ENCODE measurements at regions of chr17 and their contacts with region 1.

Region 1: DNA sequence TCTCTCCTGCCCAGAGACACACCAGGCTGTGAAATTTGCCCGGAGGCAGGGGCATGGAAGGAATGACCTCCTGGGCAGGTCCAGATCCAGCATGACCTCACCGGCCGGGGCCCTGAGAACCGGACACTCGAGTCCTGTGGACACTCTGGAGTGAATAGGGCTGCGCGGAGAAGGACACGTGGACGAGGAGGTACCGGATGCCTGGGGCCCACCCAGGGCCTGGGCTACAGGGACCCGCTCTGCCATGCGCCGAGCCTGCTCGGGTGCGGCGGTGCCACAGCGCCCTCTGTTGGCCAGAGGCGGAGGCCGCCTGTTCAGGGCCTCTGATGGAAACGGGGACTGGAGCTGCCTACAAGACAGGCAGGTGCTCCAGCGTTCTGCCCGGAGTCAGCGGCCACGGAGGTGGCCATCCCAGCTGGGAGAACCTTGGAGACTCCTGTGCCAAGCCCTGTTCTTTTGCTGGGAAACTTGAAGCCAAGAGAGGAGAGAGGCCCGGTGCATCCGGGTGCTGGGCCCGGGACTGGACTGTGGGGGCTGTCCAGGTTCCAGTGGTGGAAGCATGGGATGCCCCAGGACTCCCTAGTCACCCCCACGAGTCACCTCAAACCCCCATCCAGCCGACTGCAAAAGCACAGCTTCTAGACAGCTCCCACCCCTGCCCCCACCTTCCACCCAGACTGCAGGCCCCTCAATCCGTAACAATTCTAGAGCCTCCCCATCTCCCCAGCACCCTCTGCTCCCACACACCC is 19.3 kb upstream of the NXPH3 start:
- DNase-seq: no peak
- H3K4me3 ChIP-seq: no peak overlapping the region
- H3K27ac ChIP-seq: no peak overlapping the region
- H3K27me3 ChIP-seq: peaks cover 9% of the 10 kb centered on the region
- CTCF ChIP-seq: peak; percentile 98

Region 2: GRCh38 chr17:49399995-49400394 is 156.4 kb before region 1 on chr17:
- CTCF ChIA-PET with region 1: interaction called, 16 read pairs
- POLR2A ChIA-PET with region 1: no interaction called
- DNase-seq: no peak
- H3K4me3 ChIP-seq: no peak overlapping the region
- H3K27ac ChIP-seq: no peak overlapping the region
- H3K27me3 ChIP-seq: no peaks in the 10 kb centered on the region
- CTCF ChIP-seq: no peak

Region 3: GRCh38 chr17:49414622-49415350 is 141.6 kb before region 1 on chr17 and contains the start of gene PHB1:
- CTCF ChIA-PET with region 1: interaction called, 37 read pairs
- POLR2A ChIA-PET with region 1: no interaction called
- DNase-seq: peak; percentile 91
- H3K4me3 ChIP-seq: peak within 1 kb of the TSS; percentile 100
- H3K27ac ChIP-seq: no peak within 1 kb of the TSS
- H3K27me3 ChIP-seq: no peaks in the 10 kb centered on the region
- CTCF ChIP-seq: no peak
- polyA plus RNA-seq, gene PHB1: 228 and 263 TPM in 2 replicates

Region 4: GRCh38 chr17:49434821-49435670 is 121.4 kb before region 1 on chr17:
- CTCF ChIA-PET with region 1: interaction called, 119 read pairs
- POLR2A ChIA-PET with region 1: no interaction called
- DNase-seq: no peak
- H3K4me3 ChIP-seq: no peak overlapping the region
- H3K27ac ChIP-seq: no peak overlapping the region
- H3K27me3 ChIP-seq: peaks cover 41% of the 10 kb centered on the region
- CTCF ChIP-seq: peak; percentile 70

Region 5: GRCh38 chr17:49496183-49496866 is 60.1 kb before region 1 on chr17:
- CTCF ChIA-PET with region 1: interaction called, 25 read pairs
- POLR2A ChIA-PET with region 1: no interaction called
- DNase-seq: no peak
- H3K4me3 ChIP-seq: no peak overlapping the region
- H3K27ac ChIP-seq: no peak overlapping the region
- H3K27me3 ChIP-seq: peaks cover 62% of the 10 kb centered on the region
- CTCF ChIP-seq: peak; percentile 58

Region 6: GRCh38 chr17:49707608-49708514 is 151.5 kb after region 1 on chr17 and contains the start of gene SLC35B1:
- CTCF ChIA-PET with region 1: interaction called, 23 read pairs
- POLR2A ChIA-PET with region 1: no interaction called
- DNase-seq: peak; percentile 97
- H3K4me3 ChIP-seq: peak within 1 kb of the TSS; percentile 95
- H3K27ac ChIP-seq: peak within 1 kb of the TSS; percentile 92
- H3K27me3 ChIP-seq: no peaks in the 10 kb centered on the region
- CTCF ChIP-seq: peak; percentile 94
- polyA plus RNA-seq, gene SLC35B1: 99.1 and 109 TPM in 2 replicates

Measured in AG04450 (cell line).